ENCODE measurements at regions of chr9 and their contacts with region 1.

Region 1: DNA sequence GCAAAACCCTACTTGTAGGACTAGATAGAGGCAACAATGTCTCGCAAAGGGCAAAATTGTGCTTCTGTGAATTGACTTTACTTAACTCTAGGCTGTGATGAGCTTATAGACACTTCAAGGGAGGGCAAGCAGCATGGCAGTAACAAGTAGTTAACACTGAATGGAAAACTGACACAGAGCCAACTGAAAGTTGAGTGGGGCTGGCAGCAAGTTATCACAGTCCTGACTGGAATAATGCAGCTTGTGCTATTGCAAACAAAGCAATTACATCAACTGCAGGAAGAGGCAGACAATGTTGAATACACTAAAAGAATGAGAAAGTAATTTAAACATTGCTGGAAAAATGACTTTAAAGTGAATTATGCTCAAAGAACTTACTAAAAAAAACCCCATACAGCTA is 62.2 kb downstream of the RNF38 start:
- DNase-seq: no peak
- H3K4me3 ChIP-seq: no peak overlapping the region
- H3K27ac ChIP-seq: peak overlapping the region in 16 of 59 donors; percentile 3 to 67 (median 14)
- H3K27me3 ChIP-seq: no peaks in the 10 kb centered on the region
- CTCF ChIP-seq: no peak

Region 2: GRCh38 chr9:36400332-36401163 is 62.7 kb after region 1 on chr9:
- intact Hi-C with region 1: loop called in 1 of 2 experiments (anchors 10 kb)
- DNase-seq: peak; percentile 72 to 90 (median 84)
- H3K4me3 ChIP-seq: peak overlapping the region; percentile 61 to 98 (median 86)
- H3K27ac ChIP-seq: peak overlapping the region; percentile 84 to 99 (median 95)
- H3K27me3 ChIP-seq: no peaks in the 10 kb centered on the region
- CTCF ChIP-seq: peak in 28 of 56 donors; percentile 3 to 41 (median 18)